Activated CD8-positive, alpha-beta T cell treated with anti-CD3 and anti-CD28 coated beads, Interleukin-2, amount 10 ng/mL, durations not matched to agents 7 days and 5 days (primary cell): ENCODE measurements at regions of chrX and their contacts with region 1.

Region 1: GRCh38 chrX:100768679-100769338 is 36.9 kb upstream of the SYTL4 start:
- DNase-seq: peak; percentile 88
- ATAC-seq: no peak
- H3K4me3 Mint-ChIP-seq: no peak overlapping the region
- H3K27ac Mint-ChIP-seq: no peak overlapping the region
- H3K4me1 Mint-ChIP-seq: no peaks in the 10 kb centered on the region
- H3K27me3 Mint-ChIP-seq: peaks cover 15% of the 10 kb centered on the region

Region 2: DNA sequence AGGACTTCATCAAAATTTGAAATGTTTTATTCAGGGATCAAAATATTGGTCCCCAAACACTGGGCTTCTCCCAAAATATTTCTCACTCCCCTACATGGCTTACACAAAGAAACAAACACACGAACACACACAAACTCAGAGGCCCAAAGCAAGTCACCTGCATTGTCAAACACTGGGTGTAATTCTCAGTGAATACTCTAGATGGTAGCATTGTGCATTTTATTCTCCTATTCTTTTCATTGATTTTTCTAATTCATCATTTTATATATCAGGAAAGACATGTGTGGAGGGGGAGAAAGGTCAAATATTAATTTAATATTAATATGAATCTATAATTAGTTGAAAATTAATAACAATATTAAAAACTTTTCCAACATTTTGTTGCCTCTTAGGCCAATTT is 256.3 kb before region 1 on chrX:
- CTCF ChIA-PET with region 1: interaction called, 12 read pairs
- POLR2A ChIA-PET with region 1: no interaction called
- DNase-seq: no peak
- ATAC-seq: no peak
- H3K4me3 Mint-ChIP-seq: no peak overlapping the region
- H3K27ac Mint-ChIP-seq: no peak overlapping the region
- H3K4me1 Mint-ChIP-seq: no peaks in the 10 kb centered on the region
- H3K27me3 Mint-ChIP-seq: peaks cover 2% of the 10 kb centered on the region

Region 3: DNA sequence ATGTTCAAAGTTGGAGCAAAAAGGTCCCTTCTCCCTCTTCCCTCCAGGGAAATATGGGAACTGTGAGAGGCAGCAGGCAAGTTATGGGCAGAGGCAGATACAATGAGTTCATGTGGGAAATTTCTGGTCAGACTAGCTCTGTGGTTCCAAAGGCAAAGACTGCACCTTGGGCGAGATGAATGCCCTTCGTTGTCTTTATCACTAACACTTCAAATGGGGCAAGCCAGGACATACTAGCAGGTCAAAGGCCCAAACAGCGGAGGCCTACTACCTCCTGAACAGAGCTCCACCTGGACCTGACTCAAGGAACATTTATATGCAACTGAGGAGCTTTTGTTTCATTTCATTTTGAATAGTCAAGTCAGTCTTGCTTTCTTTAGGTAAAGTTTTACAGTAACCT is 95.8 kb before region 1 on chrX:
- CTCF ChIA-PET with region 1: interaction called, 10 read pairs
- POLR2A ChIA-PET with region 1: no interaction called
- DNase-seq: no peak
- ATAC-seq: no peak
- H3K4me3 Mint-ChIP-seq: no peak overlapping the region
- H3K27ac Mint-ChIP-seq: no peak overlapping the region
- H3K4me1 Mint-ChIP-seq: no peaks in the 10 kb centered on the region
- H3K27me3 Mint-ChIP-seq: no peaks in the 10 kb centered on the region

Region 4: DNA sequence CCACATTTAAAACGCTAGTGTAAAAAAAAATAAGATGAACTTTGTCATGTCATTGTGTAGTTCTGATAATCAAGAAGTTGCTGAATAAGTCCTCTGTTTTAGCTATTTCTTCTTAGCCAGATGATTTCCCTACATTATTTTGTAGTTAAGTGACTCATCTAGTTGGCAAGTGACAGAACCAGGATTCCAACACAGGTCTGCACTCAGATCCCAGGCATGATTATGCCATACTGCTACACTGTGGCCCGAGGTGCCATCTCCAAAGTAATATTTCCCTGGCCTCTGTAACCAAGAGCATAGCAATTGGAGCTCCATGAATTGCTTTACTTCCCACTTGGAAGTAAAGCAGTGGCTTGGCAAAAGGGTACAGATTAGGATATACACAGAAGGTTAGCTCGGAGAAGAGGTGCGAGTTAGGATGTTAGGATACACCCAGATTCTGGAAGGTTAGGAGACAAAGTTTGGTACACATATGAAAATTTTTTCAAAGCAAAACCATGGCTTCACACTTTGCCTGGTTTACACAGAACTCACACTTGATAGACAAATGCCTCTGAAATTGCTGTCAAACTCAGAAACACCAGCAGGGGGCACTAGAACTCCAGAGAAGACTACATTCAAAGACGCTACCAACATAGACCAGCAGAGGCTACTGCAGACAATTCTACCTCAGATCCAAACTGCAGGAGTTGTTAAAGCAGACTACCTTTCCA is 83.4 kb before region 1 on chrX:
- CTCF ChIA-PET with region 1: interaction called, 27 read pairs
- POLR2A ChIA-PET with region 1: no interaction called
- DNase-seq: peak; percentile 74
- ATAC-seq: peak; percentile 61
- H3K4me3 Mint-ChIP-seq: no peak overlapping the region
- H3K27ac Mint-ChIP-seq: no peak overlapping the region
- H3K4me1 Mint-ChIP-seq: peaks cover 11% of the 10 kb centered on the region
- H3K27me3 Mint-ChIP-seq: no peaks in the 10 kb centered on the region